PC-3 (cell line): ENCODE measurements at regions of chr3 and their contacts with region 1.

Region 1: GRCh38 chr3:137032465-137033120 is 74.8 kb downstream of the IL20RB start:
- DNase-seq: peak; percentile 76
- ATAC-seq: peak; percentile 35; the same call in 1 of the 2 replicates
- H3K4me3 ChIP-seq: peak overlapping the region; percentile 46; the same call in 1 of the 2 replicates
- H3K27ac ChIP-seq: no peak overlapping the region
- H3K4me1 ChIP-seq: no peaks in the 10 kb centered on the region
- H3K27me3 ChIP-seq: no peaks in the 10 kb centered on the region
- CTCF ChIP-seq: peak; percentile 71

Region 2: DNA sequence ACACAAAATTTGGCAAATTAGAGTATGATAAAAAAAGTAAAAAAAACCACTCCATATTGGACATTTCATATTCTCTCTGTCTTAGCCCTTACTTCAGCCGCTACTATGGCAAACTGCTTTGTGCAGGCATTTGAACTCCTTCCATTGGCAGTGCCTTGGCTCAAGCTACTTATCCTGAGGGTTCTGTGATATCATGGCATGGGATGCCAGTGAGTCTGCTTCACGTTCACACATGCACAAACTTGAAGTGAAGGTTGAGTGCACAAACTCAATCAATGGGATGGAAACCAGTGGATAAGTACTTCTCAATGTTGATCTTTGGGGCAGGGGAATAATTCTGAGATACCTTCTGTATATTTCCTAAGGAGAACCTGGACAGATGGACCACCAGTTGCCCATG is 42.4 kb after region 1 on chr3:
- CTCF ChIA-PET with region 1: interaction called, 10 read pairs
- POLR2A ChIA-PET with region 1: no interaction called
- intact Hi-C with region 1: no loop called
- DNase-seq: no peak
- ATAC-seq: no peak
- H3K4me3 ChIP-seq: no peak overlapping the region
- H3K27ac ChIP-seq: no peak overlapping the region
- H3K4me1 ChIP-seq: no peaks in the 10 kb centered on the region
- H3K27me3 ChIP-seq: peaks cover 15% of the 10 kb centered on the region
- CTCF ChIP-seq: no peak

Region 3: DNA sequence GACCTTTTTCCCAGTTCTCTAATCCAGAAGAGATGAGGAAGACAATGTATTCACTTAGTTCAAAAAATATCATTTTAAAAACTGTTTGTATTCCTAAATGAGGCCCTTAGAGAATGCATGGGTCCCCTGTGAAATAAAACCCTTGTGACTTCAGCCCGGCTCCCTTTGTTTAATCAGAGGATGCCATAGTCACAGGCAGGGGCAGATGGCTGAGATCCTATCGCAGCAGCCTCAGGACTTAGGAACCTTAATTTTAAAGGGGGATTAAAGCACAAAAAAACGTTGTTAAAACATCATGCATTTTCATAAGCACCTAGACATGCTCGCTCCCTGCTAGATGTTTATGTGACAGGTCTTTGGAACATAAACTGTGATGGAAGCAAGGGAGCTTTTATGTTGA is 101.8 kb after region 1 on chr3:
- CTCF ChIA-PET with region 1: no interaction called
- POLR2A ChIA-PET with region 1: no interaction called
- intact Hi-C with region 1: no loop called
- DNase-seq: no peak
- ATAC-seq: no peak
- H3K4me3 ChIP-seq: no peak overlapping the region
- H3K27ac ChIP-seq: no peak overlapping the region
- H3K4me1 ChIP-seq: no peaks in the 10 kb centered on the region
- H3K27me3 ChIP-seq: peaks cover 13% of the 10 kb centered on the region
- CTCF ChIP-seq: no peak